ENCODE measurements at regions of chr19 and their contacts with region 1.

Region 1: DNA sequence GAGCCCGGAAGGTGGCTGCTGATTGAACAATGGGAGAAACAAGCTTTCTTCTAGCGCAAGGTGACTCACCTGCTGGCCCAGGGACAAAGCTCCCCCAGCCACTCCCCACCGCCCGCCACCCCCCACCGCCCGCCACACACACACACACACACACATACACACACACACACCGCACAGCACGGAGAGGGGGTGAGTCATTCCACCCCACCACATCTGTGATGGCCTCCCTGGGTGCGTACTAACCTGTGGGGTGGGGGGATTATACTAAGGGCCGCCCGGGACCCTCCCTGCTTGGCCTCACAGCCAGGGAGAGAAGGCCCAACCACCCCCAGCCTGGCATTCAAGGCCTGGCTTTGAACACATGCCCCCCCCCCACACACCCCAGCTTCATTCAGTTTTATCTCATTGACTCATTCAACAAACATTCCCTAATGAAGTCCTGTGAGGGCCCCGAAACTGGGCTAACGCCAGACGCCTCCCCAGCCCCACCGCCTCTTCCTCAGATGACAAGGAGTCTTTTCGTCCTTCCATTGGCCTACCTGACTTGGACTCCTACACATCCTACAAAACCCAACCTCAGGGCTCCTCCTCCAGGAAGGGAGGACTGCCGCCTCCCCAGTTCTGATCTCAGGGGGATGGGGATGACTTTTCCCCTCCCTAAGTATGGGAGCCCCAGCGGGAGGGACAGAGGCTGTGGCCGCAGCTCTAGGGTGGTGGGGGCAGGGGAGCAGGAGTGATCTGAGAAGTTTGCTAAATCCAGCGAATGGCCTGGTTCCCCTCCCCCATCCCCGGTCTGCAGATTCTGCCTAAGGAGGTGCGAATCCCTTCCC is 5.8 kb upstream of the ONECUT3 start:
- DNase-seq: peak in 7 of 9 experiments; percentile 12 to 55 (median 39)
- ATAC-seq: peak; percentile 71
- H3K4me3 ChIP-seq: no peak overlapping the region
- H3K4me3 Mint-ChIP-seq: no peak overlapping the region
- H3K27ac ChIP-seq: no peak overlapping the region
- H3K27ac Mint-ChIP-seq: no peak overlapping the region
- H3K4me1 ChIP-seq: peaks cover 34% of the 10 kb centered on the region
- H3K4me1 Mint-ChIP-seq: peaks cover 9% of the 10 kb centered on the region
- H3K27me3 ChIP-seq: peaks cover 59 to 60% of the 10 kb centered on the region in 2 experiments
- H3K27me3 Mint-ChIP-seq: peaks cover 40% of the 10 kb centered on the region
- CTCF ChIP-seq: no peak

Region 2: GRCh38 chr19:1690699-1691307 is 56.7 kb before region 1 on chr19:
- CTCF ChIA-PET with region 1: no interaction called
- POLR2A ChIA-PET with region 1: no interaction called
- intact Hi-C with region 1: loop called in 1 of 2 experiments (anchors 10 kb)
- DNase-seq: peak in 7 of 9 experiments; percentile 18 to 67 (median 55)
- ATAC-seq: peak; percentile 71
- H3K4me3 ChIP-seq: no peak overlapping the region
- H3K4me3 Mint-ChIP-seq: no peak overlapping the region
- H3K27ac ChIP-seq: no peak overlapping the region
- H3K27ac Mint-ChIP-seq: no peak overlapping the region
- H3K4me1 ChIP-seq: no peaks in the 10 kb centered on the region
- H3K4me1 Mint-ChIP-seq: no peaks in the 10 kb centered on the region
- H3K27me3 ChIP-seq: peaks cover 6 to 18% of the 10 kb centered on the region in 2 experiments
- H3K27me3 Mint-ChIP-seq: peaks cover 28% of the 10 kb centered on the region
- CTCF ChIP-seq: no peak